ENCODE measurements at regions of chr2 and their contacts with region 1.

Region 1: GRCh38 chr2:170966648-170967436 is 37.8 kb downstream of the GORASP2 start:
- DNase-seq: no peak
- H3K4me3 ChIP-seq: no peak overlapping the region
- H3K27ac ChIP-seq: no peak overlapping the region
- H3K4me1 ChIP-seq: no peaks in the 10 kb centered on the region
- H3K27me3 ChIP-seq: no peaks in the 10 kb centered on the region
- CTCF ChIP-seq: peak in 1 of 6 experiments; percentile 9
- POLR2A ChIP-seq: no peak

Region 2: GRCh38 chr2:171160119-171160955 is 193.5 kb after region 1 on chr2 and contains the start of gene TLK1:
- intact Hi-C with region 1: loop called (anchors 5 kb)
- DNase-seq: peak; percentile 70 to 74
- H3K4me3 ChIP-seq: peak within 1 kb of the TSS; percentile 37 to 94 (median 66)
- H3K27ac ChIP-seq: peak within 1 kb of the TSS; percentile 86 to 98 (median 96)
- H3K4me1 ChIP-seq: peaks cover 0 to 8% of the 10 kb centered on the region in 2 donors
- H3K27me3 ChIP-seq: no peaks in the 10 kb centered on the region
- CTCF ChIP-seq: no peak
- POLR2A ChIP-seq: peak in 1 of 2 donors; percentile 65
- total RNA-seq, gene TLK1: 41.0 to 57.6 (median 51.6) TPM